Activated CD4-positive, alpha-beta memory T cell treated with anti-CD3 and anti-CD28 coated beads, Interleukin-2, amount 10 ng/mL, durations not matched to agents 7 days and 5 days (primary cell): ENCODE measurements at regions of chr5 and their contacts with region 1.

Region 1: DNA sequence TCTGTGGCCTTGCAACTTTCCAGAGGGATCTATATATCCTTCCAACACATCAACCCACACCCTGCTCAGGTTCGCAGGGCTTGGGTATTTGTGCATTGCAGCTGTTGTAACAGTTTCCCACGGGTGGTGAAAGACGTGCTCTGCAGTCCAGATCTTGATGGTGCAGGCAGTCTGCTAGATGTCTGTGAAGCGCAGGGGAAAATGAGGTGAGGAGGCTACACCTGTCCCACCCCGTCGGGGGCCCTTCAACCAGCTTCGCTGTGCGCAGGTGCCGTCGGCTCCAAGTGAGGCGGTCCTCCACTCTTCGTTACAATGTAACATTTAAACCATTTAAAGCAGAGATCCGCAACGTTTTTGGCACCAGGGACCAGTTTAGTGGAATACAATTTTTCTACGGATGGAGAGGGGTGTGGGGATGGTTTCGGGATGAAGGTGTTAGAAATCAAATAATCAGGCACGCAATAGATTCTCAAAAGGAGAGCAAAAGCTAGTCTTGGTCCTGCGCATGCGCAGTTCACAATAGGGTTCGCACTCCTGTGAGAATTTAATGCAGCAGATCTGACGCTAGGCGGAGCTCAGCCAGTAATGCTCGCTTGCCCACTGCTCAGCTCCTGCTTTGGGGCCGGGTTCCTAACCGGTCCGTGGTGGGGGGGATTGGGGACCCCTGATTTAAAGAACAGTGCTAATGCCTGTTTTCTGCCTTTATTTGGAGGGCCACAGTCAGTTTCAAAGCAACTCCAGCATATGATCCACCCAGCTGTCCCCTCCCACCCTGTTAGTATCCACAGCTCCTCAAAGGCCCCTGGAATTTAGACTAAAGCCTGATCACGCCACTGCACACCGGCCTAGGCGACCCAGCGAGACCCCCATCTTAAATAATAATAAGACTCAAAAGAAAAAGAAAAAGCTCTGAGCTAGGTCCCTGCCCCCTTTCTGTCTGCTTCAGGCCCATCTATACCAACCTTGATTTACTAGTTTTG is 97.1 kb upstream of the SELENOP start:
- DNase-seq: peak; percentile 91
- H3K4me3 Mint-ChIP-seq: peak overlapping the region; percentile 86
- H3K27ac Mint-ChIP-seq: peak overlapping the region; percentile 51
- H3K4me1 Mint-ChIP-seq: peaks cover 16% of the 10 kb centered on the region
- H3K27me3 Mint-ChIP-seq: peaks cover 33% of the 10 kb centered on the region

Region 2: GRCh38 chr5:42870882-42871418 is 37.8 kb before region 1 on chr5:
- CTCF ChIA-PET with region 1: no interaction called
- POLR2A ChIA-PET with region 1: no interaction called
- DNase-seq: no peak
- H3K4me3 Mint-ChIP-seq: no peak overlapping the region
- H3K27ac Mint-ChIP-seq: no peak overlapping the region
- H3K4me1 Mint-ChIP-seq: peaks cover 5% of the 10 kb centered on the region
- H3K27me3 Mint-ChIP-seq: peaks cover 24% of the 10 kb centered on the region

Region 3: GRCh38 chr5:42923710-42924109 is 14.9 kb after region 1 on chr5:
- CTCF ChIA-PET with region 1: interaction called, 10 read pairs
- POLR2A ChIA-PET with region 1: no interaction called
- DNase-seq: no peak
- H3K4me3 Mint-ChIP-seq: no peak overlapping the region
- H3K27ac Mint-ChIP-seq: no peak overlapping the region
- H3K4me1 Mint-ChIP-seq: no peaks in the 10 kb centered on the region
- H3K27me3 Mint-ChIP-seq: no peaks in the 10 kb centered on the region

Region 4: DNA sequence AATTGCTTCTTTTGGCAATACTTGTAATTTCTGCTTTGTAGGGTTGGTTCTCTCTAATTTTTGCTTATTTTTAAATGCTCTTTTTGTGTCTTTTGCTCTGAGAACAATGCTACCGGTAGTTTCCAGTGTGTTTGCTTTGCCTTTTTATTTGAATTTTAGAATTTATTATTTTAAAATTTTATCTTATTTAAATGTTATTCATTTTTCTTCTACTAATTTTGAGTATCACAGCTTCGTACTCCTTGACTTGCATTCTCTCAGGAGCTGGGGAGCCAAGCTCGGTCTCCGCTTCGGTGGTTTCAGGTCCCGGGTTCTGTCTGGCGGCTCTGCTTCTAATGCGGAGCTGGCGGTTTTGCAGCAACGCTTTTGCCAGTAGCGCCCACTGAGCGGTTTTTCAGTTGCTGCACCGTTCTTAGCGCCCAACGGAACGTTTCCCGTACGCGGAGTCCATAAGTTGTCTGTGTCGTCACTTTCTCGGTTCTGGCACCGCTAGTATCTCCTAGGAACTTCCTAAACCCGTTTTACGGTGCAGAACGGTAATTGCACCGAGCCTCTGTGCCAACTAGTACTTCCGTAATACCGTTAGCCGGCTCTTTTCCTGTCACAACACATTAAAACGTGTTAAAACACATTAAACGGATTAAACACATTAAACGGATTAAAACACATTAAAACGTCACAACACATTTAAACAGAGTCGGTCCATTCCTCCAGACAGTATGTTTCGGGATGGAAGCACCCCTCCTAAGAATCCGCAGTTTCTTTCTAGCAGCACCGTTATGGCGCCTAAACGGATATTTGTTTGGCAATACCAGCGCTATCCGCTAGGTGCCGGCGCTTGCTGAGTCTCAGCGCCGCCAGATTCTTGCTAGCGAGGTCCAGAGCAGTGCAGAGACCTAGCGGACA is 85.7 kb after region 1 on chr5:
- CTCF ChIA-PET with region 1: interaction called, 77 read pairs
- POLR2A ChIA-PET with region 1: interaction called, 76 read pairs
- DNase-seq: peak; percentile 91
- H3K4me3 Mint-ChIP-seq: peak overlapping the region; percentile 99
- H3K27ac Mint-ChIP-seq: peak overlapping the region; percentile 100
- H3K4me1 Mint-ChIP-seq: peaks cover 25% of the 10 kb centered on the region
- H3K27me3 Mint-ChIP-seq: no peaks in the 10 kb centered on the region

Region 5: DNA sequence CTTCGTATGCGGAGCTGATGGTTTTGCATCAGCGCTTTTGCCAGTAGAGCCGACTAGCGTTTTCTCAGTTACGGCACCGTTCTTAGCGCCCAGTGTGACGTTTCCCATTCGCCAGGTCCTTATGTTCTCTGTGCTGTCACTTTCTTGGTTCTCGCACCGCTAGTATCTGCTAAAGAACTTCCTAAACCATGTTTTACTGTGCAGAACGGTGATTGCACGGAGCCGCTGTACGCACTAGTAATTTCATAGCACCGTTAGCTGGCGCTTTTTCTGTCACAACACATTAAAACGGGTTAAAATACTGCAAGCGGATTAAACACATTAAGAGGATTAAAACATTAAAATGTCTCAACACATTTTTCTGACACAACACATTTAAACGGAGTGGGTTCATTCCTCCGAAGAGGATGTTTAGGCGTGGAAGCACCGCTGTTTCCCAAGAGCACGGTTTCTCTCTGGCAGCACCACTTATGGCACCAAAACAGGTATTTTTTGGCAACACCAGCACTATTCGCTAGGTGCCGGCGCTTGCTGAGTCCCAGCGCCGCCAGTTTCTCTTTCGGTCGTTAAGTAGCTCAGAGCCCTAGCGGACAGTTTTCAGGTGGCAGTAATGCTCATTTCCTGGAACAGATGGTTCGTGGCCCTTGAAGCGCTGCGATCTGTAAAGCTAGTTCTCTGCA is 111.0 kb after region 1 on chr5:
- CTCF ChIA-PET with region 1: interaction called, 32 read pairs
- POLR2A ChIA-PET with region 1: interaction called, 24 read pairs
- DNase-seq: peak; percentile 90
- H3K4me3 Mint-ChIP-seq: peak overlapping the region; percentile 93
- H3K27ac Mint-ChIP-seq: peak overlapping the region; percentile 99
- H3K4me1 Mint-ChIP-seq: peaks cover 42% of the 10 kb centered on the region
- H3K27me3 Mint-ChIP-seq: no peaks in the 10 kb centered on the region

Region 6: DNA sequence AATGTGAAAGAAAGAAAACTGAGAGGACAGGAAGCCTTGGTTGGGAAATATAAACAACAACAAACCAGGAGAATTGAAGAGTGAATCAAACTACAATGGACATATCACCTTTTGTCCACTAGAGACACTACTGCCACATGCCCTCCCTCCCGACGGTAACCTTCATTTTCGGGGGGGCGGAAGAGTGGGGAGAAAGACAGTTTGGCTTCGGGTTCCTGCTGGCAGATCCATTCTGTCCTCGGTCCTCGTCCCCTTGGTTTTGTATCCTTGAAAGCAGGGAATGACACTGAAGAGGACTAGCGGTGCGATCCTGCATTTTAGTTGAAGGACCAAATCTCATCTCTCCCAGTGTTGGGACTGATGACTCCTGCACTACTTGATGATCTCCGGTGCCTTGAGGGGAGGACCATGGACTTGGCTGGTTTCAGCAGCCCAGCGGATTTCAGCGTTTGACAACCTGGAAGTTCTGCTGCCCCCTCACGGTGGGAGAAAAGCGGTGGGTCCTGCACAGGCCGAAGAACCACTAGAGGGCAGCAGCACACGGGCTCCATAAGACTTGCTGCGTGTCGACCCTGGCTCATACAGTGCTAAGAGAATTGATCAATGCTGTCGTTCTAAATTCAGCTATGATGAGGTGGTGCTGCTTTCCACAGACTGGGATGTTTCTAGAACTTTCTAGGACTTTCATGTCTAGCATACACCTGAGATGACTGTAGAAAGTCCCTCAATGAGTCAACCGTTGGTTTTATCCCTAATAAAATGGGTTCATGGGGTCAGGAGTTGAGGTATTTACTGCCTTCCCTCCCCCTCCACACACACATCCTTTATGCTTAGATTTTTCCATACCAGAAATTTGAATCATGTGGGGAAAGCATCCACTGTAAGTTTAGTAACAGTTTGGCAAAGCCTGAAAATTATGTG is 196.8 kb after region 1 on chr5:
- CTCF ChIA-PET with region 1: interaction called, 14 read pairs
- POLR2A ChIA-PET with region 1: no interaction called
- DNase-seq: peak; percentile 90
- H3K4me3 Mint-ChIP-seq: peak overlapping the region; percentile 78
- H3K27ac Mint-ChIP-seq: peak overlapping the region; percentile 83
- H3K4me1 Mint-ChIP-seq: peaks cover 45% of the 10 kb centered on the region
- H3K27me3 Mint-ChIP-seq: no peaks in the 10 kb centered on the region